OCI-LY7 (cell line): ENCODE measurements at regions of chr19 and their contacts with region 1.

Region 1: GRCh38 chr19:38849860-38850435 is at the start of gene HNRNPL:
- DNase-seq: peak; percentile 100
- H3K4me3 ChIP-seq: peak within 1 kb of the TSS; percentile 94
- H3K27ac ChIP-seq: peak within 1 kb of the TSS; percentile 92
- H3K4me1 ChIP-seq: peaks cover 29% of the 10 kb centered on the region
- CTCF ChIP-seq: peak; percentile 42
- total RNA-seq, gene HNRNPL: 236 and 263 TPM in 2 replicates

Region 2: GRCh38 chr19:38618590-38619360 is 231.2 kb before region 1 on chr19 and contains the start of gene EIF3K:
- CTCF ChIA-PET with region 1: interaction called, 4 read pairs
- POLR2A ChIA-PET with region 1: no interaction called
- intact Hi-C with region 1: loop called (anchors 1 kb)
- DNase-seq: peak; percentile 99
- H3K4me3 ChIP-seq: peak within 1 kb of the TSS; percentile 92
- H3K27ac ChIP-seq: peak within 1 kb of the TSS; percentile 87
- H3K4me1 ChIP-seq: peaks cover 37% of the 10 kb centered on the region
- CTCF ChIP-seq: no peak
- total RNA-seq, gene EIF3K: 321 and 325 TPM in 2 replicates

Region 3: DNA sequence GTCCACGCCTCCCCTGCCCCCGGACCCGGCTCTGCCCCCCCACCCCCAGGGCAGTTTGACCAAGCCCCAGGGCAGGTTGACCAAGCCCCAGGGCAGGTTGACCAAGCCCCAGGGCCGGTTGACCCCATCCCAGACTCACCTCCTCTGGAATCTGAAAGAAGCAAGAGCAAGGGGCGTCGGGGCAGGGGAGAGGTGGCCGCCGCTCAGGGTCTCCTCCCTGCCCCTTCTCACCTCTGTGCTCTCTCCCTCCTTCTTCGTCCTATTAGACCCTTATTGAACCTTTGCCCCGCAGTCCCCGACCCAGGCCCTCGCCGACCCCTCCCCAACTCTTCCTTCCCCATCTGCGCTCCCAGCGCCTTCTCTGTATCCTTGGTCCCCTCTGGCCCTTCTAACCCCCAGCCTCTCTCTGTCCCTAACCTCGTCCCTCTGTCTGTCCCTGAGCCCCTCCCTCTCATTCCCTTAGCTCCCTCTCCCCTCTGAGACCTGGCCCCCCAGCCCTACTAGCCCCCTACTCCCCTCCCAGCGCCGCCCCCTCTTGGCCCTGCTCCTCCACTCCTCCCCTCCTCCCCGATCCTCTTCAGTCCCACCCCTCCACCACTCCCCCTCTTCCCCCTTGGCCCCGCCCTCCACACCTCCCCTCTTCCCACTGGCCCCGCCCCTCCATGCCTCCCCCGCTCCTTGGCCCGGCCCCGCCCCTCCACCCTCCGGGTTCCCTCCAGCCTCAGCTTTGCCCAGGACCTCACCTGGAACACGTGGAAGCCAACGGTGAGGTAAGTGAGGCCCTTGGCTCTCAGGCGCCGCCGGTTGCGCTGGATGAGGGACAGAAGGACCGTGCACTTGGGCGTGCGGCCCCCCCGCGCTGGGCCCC is 113.3 kb before region 1 on chr19:
- CTCF ChIA-PET with region 1: no interaction called
- POLR2A ChIA-PET with region 1: no interaction called
- intact Hi-C with region 1: no loop called
- DNase-seq: peak; percentile 40
- H3K4me3 ChIP-seq: no peak overlapping the region
- H3K27ac ChIP-seq: no peak overlapping the region
- H3K4me1 ChIP-seq: peaks cover 20% of the 10 kb centered on the region
- CTCF ChIP-seq: no peak

Region 4: GRCh38 chr19:38869856-38870607 is 20.1 kb after region 1 on chr19:
- CTCF ChIA-PET with region 1: no interaction called
- POLR2A ChIA-PET with region 1: interaction called, 6 read pairs
- intact Hi-C with region 1: loop called (anchors 1 kb)
- DNase-seq: peak; percentile 96
- H3K4me3 ChIP-seq: peak overlapping the region; percentile 73
- H3K27ac ChIP-seq: peak overlapping the region; percentile 64
- H3K4me1 ChIP-seq: peaks cover 53% of the 10 kb centered on the region
- CTCF ChIP-seq: peak; percentile 85

Region 5: DNA sequence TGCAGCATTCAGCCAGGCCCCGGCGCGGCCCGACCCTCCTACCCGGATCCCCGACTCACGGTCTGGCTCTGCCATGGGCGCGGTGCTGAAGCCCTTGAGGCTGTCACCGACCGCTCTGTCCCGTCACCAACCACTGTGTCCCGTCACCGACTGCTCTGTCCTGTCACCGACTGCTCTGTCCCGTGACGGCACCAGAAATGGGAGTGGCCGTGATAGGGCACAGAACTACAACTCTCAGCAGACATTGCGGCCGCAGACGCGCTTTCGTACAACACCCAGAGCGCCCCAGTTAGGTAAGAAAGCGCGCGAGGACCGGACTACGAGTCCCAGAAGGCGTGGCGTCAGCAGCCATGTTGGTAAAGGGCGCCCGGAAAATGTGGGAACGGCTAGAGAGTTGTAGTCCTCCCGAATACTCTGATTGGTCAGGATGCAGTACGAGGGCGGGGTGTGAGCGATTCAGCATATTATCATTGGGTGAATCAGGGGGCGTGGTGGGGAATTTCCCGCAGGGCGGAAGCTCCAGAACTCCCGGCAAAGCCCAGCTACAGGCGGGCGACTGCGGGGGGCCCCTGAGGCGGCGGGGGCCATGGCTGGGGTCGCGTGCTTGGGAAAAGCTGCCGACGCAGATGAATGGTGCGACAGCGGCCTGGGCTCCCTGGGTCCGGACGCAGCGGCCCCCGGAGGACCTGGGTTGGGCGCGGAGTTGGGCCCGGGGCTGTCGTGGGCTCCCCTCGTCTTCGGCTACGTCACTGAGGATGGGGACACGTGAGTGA is 49.7 kb after region 1 on chr19 and contains the starts of genes NFKBIB and SIRT2:
- CTCF ChIA-PET with region 1: no interaction called
- POLR2A ChIA-PET with region 1: no interaction called
- intact Hi-C with region 1: loop called (anchors 2 kb)
- DNase-seq: peak; percentile 100
- H3K4me3 ChIP-seq: peak within 1 kb of the TSS; percentile 83
- H3K27ac ChIP-seq: peak within 1 kb of the TSS; percentile 7
- H3K4me1 ChIP-seq: peaks cover 16% of the 10 kb centered on the region
- CTCF ChIP-seq: no peak
- total RNA-seq, gene NFKBIB: 16.0 and 20.4 TPM in 2 replicates
- total RNA-seq, gene SIRT2: 25.5 and 26.0 TPM in 2 replicates

Region 6: DNA sequence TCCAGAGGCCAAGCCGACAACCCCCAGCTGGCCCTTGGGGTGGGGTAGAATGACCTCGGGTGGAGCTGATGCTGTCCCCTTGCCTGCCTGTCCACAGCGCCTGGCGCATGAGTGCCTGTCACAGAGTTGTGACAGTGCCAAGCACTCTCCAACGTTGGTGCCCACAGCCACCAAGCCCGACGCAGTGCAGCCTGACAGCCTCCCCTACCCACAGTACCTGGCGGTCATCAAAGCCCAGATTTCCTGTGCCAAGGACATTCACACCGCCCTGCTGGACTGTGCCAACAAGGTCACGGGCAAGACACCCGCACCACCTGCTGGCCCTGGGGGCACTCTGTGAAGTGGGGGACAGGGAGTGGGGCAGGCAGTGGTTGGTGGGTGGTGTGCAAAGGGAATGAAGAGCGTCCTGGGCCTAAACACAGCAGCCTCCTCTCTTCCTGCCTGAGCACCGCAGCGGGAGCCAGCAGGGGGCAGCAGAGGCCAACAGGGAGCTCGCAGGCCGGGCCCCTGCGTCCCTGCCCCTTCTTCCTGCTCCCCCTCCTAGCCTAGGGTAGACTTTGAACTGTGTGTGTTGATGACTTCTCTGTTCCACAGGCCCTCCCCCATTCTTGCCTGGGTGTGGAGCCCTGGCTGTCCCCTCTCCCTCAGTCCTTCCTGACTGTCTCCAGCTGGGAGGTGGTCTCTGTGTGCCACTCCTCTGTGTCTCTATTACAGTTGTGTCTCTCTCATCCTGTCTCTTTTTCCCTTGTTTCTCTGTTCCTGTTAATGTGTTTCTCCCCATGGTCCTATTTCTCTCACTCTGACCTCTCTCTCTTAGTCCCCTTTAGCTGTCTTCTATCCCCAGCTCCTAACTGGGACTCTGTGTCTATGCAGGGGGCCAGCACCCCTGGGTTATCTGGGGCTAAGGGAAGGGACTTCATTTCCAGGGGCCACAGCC is 547.7 kb after region 1 on chr19:
- CTCF ChIA-PET with region 1: no interaction called
- POLR2A ChIA-PET with region 1: no interaction called
- intact Hi-C with region 1: loop called (anchors 10 kb)
- DNase-seq: peak; percentile 89
- H3K4me3 ChIP-seq: peak overlapping the region; percentile 27
- H3K27ac ChIP-seq: peak overlapping the region; percentile 75
- H3K4me1 ChIP-seq: peaks cover 57% of the 10 kb centered on the region
- CTCF ChIP-seq: peak; percentile 88